ENCODE measurements at regions of chr9 and their contacts with region 1.

Region 1: DNA sequence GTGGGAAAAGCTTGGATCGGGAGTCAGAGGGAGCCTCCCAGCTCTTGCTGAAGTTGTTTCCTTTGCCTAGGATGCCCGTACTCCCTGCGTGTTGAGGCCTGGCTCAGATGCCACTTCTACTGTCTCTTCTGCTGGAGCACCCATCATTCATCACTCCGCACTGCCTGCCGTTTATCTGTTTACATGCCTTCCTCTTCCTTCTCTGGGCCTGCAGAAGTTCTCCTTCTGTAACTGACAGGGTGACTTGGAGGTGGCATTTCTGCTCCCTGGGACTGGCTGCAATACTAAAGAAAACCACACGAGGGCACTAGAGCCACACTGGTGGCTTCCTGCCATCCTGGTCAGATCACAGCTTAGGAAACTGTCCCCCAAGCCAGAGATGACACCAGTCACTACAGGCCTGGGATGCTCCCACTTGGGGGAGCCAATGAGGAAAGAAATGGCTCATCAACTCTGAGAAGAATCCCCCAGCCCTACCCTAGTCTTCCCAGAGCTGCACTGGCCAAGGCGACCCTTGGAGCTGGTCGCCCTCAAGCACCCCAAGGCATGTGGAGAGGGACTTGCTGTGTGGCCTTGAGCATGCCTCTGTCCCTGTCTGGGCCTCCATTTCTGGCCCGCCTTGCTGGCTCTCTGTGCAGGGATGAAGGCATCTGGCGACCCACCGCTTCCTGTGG is 9.7 kb upstream of the SLC25A51 start:
- DNase-seq: peak; percentile 77
- ATAC-seq: peak; percentile 78 to 90

Region 2: GRCh38 chr9:38088006-38088925 is 174.6 kb after region 1 on chr9:
- intact Hi-C with region 1: loop called in 1 of 2 experiments (anchors 5 kb)
- DNase-seq: peak; percentile 72
- ATAC-seq: peak; percentile 77 to 88

Region 3: GRCh38 chr9:38160613-38161215 is 247.1 kb after region 1 on chr9:
- intact Hi-C with region 1: loop called (anchors 2 to 5 kb)
- DNase-seq: peak; percentile 73
- ATAC-seq: peak; percentile 33 to 57